ENCODE measurements at regions of chr1 and their contacts with region 1.

Region 1: DNA sequence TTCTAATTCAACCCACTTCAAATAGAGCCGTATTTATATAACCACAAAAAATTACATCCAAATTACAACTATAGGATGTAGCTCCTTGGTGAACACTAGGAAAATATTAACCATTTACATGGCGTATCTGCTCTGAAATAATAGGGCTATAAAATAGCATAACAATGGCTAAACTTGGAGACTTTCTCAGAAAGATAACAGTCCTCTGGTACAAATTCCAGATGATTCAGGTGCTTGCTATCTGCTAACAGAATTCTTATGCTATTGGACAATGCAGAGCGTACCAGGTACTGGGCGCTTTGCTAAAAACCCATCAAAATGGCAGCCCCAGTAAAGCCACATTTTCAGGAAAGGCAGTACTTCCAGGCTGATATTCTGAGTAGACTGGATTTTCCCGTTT is 209.7 kb upstream of the C8B start:
- DNase-seq: no peak
- ATAC-seq: no peak

Region 2: GRCh38 chr1:57195436-57195941 is 20.0 kb after region 1 on chr1:
- intact Hi-C with region 1: loop called (anchors 2 kb)
- DNase-seq: no peak
- ATAC-seq: no peak

Region 3: GRCh38 chr1:57258557-57259325 is 83.2 kb after region 1 on chr1:
- intact Hi-C with region 1: no loop called
- DNase-seq: no peak
- ATAC-seq: no peak

Measured in sciatic nerve (tissue), 2 donors.